Common myeloid progenitor, CD34-positive (primary cell): ENCODE measurements at regions of chr10 and their contacts with region 1.

Region 1: DNA sequence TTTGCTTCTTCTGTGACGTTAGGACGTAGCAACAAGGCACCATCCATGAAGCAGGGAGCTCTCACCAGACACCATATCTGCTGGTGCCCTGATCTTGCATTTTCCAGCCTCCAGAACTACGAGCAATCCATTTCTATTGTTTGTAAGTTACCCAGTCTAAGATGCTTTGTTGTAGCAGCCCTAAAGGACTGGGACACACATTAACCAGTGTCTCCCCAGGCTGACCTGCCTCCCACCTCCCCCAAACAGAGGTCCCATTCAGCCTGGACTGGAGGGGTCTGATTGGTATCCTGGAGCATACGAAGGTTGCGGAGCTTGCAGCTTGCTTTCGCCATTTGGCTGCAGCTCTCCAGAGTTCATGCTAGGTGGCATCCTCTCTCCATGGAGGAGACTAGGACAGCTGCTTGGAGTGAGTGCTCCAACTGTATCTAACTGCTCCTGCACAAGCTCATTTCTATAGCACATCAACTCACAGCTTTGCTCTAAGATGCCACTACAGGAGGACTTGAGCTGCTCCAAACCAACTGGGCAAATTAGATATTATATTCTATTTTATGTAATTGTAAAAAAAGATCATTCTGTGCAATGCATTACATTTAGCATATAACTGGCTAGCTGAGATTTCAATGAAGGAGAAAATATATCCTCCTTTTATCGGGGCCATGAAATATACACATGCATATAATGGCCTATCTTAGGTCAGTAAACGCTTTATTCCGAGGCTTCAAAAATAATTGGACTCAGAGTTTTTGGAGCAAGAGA is 8.0 kb upstream of the GRK5 start:
- DNase-seq: peak; percentile 76 to 87 (median 85)
- H3K4me3 ChIP-seq: no peak overlapping the region
- H3K27ac ChIP-seq: no peak overlapping the region
- H3K4me1 ChIP-seq: peaks cover 0 to 9% (median 5%) of the 10 kb centered on the region in 4 experiments
- H3K27me3 ChIP-seq: no peaks in the 10 kb centered on the region

Region 2: DNA sequence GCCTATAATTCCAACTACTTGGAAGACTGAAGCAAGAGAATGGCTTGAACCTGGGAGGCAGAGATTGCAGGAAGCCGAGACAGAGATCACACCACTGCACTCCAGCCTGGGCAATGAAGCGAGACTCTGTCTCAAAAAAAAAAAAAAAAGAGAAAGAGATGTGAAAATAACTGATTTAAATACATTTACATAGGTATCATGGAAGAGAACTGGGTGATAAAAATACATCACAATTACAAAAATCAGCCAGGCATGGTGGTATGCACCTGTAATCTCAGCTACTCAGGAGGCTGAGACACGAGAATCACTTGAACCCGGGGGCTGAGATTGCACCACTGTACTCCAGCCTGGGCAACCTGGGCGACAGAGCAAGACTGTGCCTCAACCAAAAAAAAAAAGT is 150.1 kb before region 1 on chr10:
- CTCF ChIA-PET with region 1: no interaction called
- POLR2A ChIA-PET with region 1: no interaction called
- DNase-seq: no peak
- H3K4me3 ChIP-seq: no peak overlapping the region
- H3K27ac ChIP-seq: no peak overlapping the region
- H3K4me1 ChIP-seq: no peaks in the 10 kb centered on the region
- H3K27me3 ChIP-seq: no peaks in the 10 kb centered on the region

Region 3: DNA sequence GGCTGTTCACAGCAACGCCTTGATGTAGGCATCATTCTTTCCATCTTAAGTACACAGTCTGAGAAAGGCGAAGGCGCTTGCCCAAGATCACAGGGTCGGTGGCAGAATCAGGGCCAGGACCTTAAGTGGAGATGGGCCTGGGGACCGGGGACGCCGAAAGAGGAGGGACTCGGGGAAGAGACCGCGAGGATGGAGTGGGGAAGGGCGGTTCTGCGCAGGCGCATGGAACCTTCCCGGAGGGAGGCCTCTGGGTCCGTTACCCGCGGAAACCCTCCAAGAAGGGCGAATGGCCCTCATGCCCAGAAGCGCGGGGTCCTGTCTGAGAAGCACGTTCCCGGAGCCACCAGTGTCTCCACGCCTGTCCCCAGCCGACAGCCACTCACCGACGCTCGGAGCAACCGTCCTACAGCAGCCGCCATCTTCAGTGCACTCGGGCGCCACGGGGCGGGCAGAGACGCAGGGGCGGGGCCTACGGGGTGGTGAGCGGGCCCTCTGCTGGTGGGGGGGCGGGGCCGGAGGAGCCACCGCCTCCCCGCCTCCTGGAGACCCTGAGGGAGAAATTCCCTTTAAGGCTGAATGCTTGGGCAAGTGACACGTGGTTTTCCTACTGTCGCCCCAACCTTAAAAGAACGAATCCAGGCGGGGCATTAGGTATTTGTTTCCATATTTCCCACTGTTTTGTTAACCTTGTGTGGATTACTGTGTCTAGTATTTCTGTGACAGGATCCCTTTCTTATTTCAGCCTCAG is 20.9 kb before region 1 on chr10 and contains the start of gene PRDX3:
- CTCF ChIA-PET with region 1: interaction called, 14 read pairs
- POLR2A ChIA-PET with region 1: no interaction called
- DNase-seq: peak; percentile 87 to 92 (median 91)
- H3K4me3 ChIP-seq: peak within 1 kb of the TSS; percentile 61 to 98 (median 86)
- H3K27ac ChIP-seq: peak within 1 kb of the TSS; percentile 79 to 89
- H3K4me1 ChIP-seq: peaks cover 5 to 24% (median 18%) of the 10 kb centered on the region in 4 experiments
- H3K27me3 ChIP-seq: no peaks in the 10 kb centered on the region

Region 4: GRCh38 chr10:119407254-119407777 is 207.9 kb after region 1 on chr10:
- CTCF ChIA-PET with region 1: interaction called, 154 read pairs
- POLR2A ChIA-PET with region 1: no interaction called
- DNase-seq: no peak
- H3K4me3 ChIP-seq: no peak overlapping the region
- H3K27ac ChIP-seq: no peak overlapping the region
- H3K4me1 ChIP-seq: peaks cover 5 to 16% (median 9%) of the 10 kb centered on the region in 4 experiments
- H3K27me3 ChIP-seq: no peaks in the 10 kb centered on the region

Region 5: DNA sequence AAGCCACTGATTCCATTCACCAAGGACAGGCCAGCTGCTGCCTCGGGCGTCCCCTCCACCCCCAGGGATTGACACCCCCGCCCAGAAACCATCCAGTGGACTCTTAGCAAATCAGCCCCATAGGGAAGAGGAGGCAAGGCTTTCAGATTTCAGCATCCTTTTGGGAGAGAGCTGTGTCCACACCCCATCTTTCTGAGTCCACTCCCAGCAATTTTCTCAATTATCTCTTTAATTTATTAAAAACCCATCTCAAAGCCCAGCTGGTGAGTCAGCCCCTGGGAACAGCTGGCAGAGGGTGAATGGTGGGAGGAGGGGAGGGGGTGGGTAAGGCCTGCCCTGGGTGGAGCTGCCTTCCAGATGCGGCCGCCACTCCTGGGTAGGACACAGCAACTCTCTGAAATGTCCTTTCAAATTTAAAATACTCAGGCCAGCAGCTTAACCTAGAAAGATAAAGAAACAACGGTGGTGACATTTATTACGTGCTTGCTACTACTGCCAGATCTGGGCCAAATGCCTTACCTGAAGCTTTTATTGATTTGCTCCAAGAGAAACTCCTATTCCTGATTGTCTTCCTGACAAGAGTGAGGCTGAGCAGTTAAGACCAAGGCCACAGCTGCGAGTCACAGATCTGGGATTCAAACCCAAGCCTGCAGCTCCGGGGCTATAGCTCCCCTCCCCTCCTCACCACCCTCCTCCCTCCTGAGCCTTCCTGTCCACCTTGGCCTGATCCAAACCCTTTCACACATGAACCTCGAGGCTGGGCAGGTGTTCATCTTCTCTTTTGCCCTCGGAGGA is 222.7 kb after region 1 on chr10:
- CTCF ChIA-PET with region 1: interaction called, 154 read pairs
- POLR2A ChIA-PET with region 1: no interaction called
- DNase-seq: no peak
- H3K4me3 ChIP-seq: no peak overlapping the region
- H3K27ac ChIP-seq: no peak overlapping the region
- H3K4me1 ChIP-seq: no peaks in the 10 kb centered on the region
- H3K27me3 ChIP-seq: peaks cover 0 to 10% (median 0%) of the 10 kb centered on the region in 5 experiments